ENCODE measurements at regions of chr4 and their contacts with region 1.

Region 1: GRCh38 chr4:88964450-88964849 is 92.5 kb downstream of the FAM13A start:
- DNase-seq: peak; percentile 18
- H3K4me3 Mint-ChIP-seq: no peak overlapping the region
- H3K27ac Mint-ChIP-seq: no peak overlapping the region
- H3K4me1 Mint-ChIP-seq: peaks cover 11% of the 10 kb centered on the region
- H3K27me3 Mint-ChIP-seq: no peaks in the 10 kb centered on the region

Region 2: DNA sequence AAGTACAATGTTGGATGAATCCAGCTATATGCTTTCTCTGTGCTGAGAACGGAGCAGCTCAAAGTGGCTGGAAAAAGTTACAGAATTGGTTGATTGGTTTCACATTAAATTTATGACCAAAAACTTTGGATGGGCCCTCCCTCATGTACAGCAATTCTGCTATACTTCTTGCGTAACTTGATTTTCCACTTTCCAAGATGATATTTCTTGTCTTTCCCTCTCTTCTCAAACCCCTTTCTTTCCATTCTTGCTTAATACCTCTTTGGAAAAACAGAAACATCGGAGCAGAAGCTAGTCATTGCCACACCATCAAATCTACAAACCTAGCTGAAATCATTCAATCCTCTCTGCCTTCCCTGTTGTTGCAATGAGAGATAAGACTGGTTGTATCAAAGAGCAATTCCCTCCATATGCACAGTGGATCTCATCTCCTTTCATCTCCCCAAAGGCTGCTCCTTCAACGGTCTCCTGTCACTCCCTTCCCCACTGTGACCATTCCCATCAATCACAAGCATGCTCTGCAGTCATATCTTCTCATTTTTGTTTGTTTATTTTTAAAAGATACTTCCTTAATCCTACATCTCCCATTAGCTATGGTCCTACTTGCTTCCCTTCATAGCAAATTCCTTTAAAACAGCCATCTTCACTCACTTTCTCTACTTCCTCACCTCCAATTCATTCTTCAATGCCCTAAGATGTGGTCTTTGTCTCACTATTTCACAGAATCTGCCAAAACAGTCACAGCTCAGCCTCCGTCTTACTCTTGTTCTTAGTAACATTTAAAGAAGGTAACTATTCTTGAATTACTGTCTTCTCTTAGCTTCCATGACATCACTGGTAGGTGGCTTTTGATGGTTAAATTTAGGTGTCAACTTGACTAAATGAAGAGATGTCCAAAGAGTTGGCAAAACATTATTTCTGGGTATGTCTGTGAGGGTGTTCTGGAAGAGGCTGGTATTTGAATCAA is 52.9 kb before region 1 on chr4:
- CTCF ChIA-PET with region 1: no interaction called
- intact Hi-C with region 1: loop called (anchors 1 kb)
- DNase-seq: peak; percentile 41
- H3K4me3 Mint-ChIP-seq: no peak overlapping the region
- H3K27ac Mint-ChIP-seq: no peak overlapping the region
- H3K4me1 Mint-ChIP-seq: no peaks in the 10 kb centered on the region
- H3K27me3 Mint-ChIP-seq: no peaks in the 10 kb centered on the region

Region 3: DNA sequence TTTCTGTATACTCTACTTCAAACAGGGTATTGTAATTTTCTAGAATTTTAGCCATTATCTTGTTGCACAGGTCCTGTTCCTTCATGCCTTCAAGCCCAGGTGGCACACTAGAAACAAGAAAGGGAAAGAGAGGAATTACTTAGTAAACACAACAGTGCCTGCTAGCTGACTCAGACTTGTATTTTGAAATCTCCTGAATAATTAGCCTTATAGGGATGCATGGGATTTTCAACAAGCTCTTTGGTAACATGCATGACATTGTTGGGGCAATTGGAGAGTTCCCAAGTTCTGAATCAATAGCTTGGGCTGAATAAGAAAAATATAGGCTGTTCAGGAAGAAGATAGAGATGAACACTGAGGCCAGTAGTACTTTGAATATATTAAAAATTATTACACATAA is 26.3 kb before region 1 on chr4:
- CTCF ChIA-PET with region 1: no interaction called
- intact Hi-C with region 1: loop called (anchors 2 kb)
- DNase-seq: no peak
- H3K4me3 Mint-ChIP-seq: no peak overlapping the region
- H3K27ac Mint-ChIP-seq: no peak overlapping the region
- H3K4me1 Mint-ChIP-seq: peaks cover 40% of the 10 kb centered on the region
- H3K27me3 Mint-ChIP-seq: no peaks in the 10 kb centered on the region

Region 4: DNA sequence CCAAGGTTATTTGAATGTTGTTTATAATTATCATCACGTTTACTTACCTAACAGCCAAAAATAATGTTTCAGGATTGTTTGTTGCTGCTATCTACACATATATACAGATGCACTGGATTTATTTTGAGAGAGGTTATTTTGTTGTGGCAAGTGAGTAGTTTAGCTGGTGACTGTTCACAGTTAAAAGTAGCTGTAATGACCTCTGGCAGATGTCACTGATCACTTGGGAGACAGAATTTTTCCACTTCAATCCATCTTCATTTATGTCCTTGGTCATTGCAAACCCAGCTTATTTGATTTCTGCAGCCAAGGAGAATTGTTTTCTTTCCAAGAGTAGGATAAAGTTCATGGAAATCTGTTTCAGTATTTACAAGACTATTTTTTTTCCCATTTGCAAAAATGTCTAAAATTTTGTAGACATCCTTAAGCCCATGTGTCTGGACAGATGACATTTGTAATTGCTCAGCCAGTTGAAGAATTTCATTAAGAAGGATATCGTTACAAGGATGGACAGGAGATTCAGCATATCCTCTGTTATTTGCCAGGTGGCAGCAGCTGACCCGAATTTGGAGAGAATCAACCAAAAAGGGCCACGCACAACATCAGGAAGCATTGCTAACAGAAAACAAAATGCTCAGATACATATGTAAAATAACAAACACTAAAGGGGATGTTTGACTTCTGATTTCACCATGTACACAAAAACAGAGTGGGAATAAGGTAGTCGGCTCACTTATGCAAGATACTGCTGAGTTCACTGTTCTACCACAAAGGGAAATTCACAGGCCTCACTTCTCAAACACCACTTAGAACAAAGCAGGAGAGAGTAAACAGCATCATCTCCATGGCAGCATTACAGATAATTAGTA is 278.6 kb after region 1 on chr4:
- CTCF ChIA-PET with region 1: no interaction called
- intact Hi-C with region 1: no loop called
- DNase-seq: peak; percentile 12
- H3K4me3 Mint-ChIP-seq: no peak overlapping the region
- H3K27ac Mint-ChIP-seq: peak overlapping the region; percentile 24
- H3K4me1 Mint-ChIP-seq: peaks cover 24% of the 10 kb centered on the region
- H3K27me3 Mint-ChIP-seq: no peaks in the 10 kb centered on the region

Measured in activated naive CD4-positive, alpha-beta T cell treated with anti-CD3 and anti-CD28 coated beads for 36 hours (primary cell).